Vagina (tissue), 2 donors: ENCODE measurements at regions of chr20 and their contacts with region 1.

Region 1: DNA sequence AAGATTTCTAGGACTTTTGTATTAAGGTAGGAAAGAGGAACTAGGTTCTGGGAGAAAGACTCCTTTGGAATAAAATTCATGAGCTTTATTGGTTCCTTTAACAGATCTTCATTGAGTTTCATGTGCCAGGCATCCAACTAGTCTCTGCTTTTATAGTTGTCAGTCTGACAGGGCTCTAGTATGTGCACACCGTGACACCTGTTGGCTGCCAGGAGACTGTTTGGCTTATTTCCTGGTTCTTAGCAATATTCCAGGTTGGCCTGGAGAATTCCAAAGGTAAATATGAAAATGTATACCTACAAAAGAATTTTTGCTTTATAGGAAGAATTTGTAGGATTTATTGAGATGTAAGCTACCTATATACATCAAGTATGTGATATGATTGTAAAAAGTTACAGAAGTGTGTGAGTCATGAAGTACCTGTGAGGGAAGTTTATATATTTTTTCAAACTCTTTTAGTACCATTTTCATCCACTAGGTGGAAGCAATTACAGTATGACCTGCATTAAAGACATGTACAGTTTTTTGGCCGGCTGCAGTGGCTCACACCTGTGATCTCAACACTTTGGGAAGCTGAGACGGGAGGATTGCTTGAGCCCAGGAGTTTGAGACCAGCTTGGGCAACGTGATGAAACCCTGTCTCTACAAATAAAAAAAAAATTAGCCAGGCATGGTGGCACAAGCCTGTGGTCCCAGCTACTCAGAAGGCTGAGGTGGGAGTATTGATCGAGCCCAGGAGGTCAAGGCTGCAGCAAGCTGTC is 35.2 kb downstream of the NDUFAF5 start:
- DNase-seq: no peak
- H3K4me3 ChIP-seq: no peak overlapping the region
- H3K27ac ChIP-seq: no peak overlapping the region
- H3K4me1 ChIP-seq: no peaks in the 10 kb centered on the region
- H3K27me3 ChIP-seq: no peaks in the 10 kb centered on the region
- CTCF ChIP-seq: peak in 2 of 3 experiments; percentile 63 to 69
- POLR2A ChIP-seq: no peak

Region 2: GRCh38 chr20:13694420-13695150 is 125.5 kb before region 1 on chr20:
- intact Hi-C with region 1: no loop called
- DNase-seq: no peak
- H3K4me3 ChIP-seq: no peak overlapping the region
- H3K27ac ChIP-seq: no peak overlapping the region
- H3K4me1 ChIP-seq: no peaks in the 10 kb centered on the region
- H3K27me3 ChIP-seq: no peaks in the 10 kb centered on the region
- CTCF ChIP-seq: no peak
- POLR2A ChIP-seq: no peak

Region 3: GRCh38 chr20:14055127-14055742 is 235.2 kb after region 1 on chr20:
- intact Hi-C with region 1: loop called (anchors 10 kb)
- DNase-seq: no peak
- H3K4me3 ChIP-seq: no peak overlapping the region
- H3K27ac ChIP-seq: no peak overlapping the region
- H3K4me1 ChIP-seq: no peaks in the 10 kb centered on the region
- H3K27me3 ChIP-seq: no peaks in the 10 kb centered on the region
- CTCF ChIP-seq: peak; percentile 35 to 48 (median 41)
- POLR2A ChIP-seq: no peak

Region 4: GRCh38 chr20:14453259-14453658 is 633.2 kb after region 1 on chr20:
- intact Hi-C with region 1: no loop called
- DNase-seq: no peak
- H3K4me3 ChIP-seq: no peak overlapping the region
- H3K27ac ChIP-seq: no peak overlapping the region
- H3K4me1 ChIP-seq: no peaks in the 10 kb centered on the region
- H3K27me3 ChIP-seq: no peaks in the 10 kb centered on the region
- CTCF ChIP-seq: no peak
- POLR2A ChIP-seq: no peak